Common myeloid progenitor, CD34-positive (primary cell): ENCODE measurements at regions of chr4 and their contacts with region 1.

Region 1: GRCh38 chr4:42656944-42657792 is at the start of gene ATP8A1:
- DNase-seq: peak; percentile 92 to 96 (median 94)
- H3K4me3 ChIP-seq: peak within 1 kb of the TSS; percentile 90 to 98 (median 93)
- H3K27ac ChIP-seq: peak within 1 kb of the TSS; percentile 96 to 98
- H3K4me1 ChIP-seq: peaks cover 26 to 42% (median 34%) of the 10 kb centered on the region in 4 experiments
- H3K27me3 ChIP-seq: no peaks in the 10 kb centered on the region

Region 2: DNA sequence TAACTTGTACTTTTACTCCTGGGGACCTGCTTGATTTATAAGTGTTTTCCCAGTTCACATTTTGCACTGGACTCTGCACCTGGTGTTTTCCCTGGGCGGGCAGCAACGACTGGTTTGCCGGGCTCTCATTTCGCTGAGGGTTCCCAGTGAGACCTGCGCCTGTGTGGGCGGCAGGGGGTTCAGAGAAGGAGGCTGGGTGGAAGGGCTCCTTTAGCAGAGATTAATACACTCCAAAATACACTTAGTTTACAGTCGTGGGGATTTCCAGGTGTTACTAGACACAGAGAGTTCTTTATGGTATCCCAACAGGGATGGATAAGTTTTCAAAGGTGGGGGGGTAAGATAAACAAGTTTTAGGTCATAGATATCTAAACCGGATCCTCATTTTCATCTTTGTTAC is 312.9 kb before region 1 on chr4:
- CTCF ChIA-PET with region 1: no interaction called
- POLR2A ChIA-PET with region 1: no interaction called
- DNase-seq: no peak
- H3K4me3 ChIP-seq: no peak overlapping the region
- H3K27ac ChIP-seq: no peak overlapping the region
- H3K4me1 ChIP-seq: no peaks in the 10 kb centered on the region
- H3K27me3 ChIP-seq: peaks cover 0 to 7% (median 0%) of the 10 kb centered on the region in 5 experiments

Region 3: DNA sequence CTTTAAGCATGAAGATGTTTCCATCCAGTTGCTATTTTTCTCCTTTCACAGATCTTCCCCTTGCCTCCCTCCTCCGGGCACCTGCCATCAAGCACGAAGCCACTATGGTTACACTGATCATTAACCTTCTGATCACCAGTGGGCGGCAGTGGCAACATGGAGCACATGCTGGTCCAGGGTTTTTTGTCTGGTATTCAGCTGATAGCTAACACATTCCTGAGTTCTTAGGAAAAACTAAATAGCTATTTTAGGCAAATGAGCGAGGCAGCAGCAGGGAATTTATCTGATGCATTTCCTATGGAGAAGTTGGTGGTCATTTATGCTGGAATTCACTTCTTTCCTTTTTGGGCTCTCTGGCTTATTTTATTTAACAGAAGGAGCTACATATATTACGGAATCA is 237.0 kb before region 1 on chr4:
- CTCF ChIA-PET with region 1: no interaction called
- POLR2A ChIA-PET with region 1: no interaction called
- DNase-seq: no peak
- H3K4me3 ChIP-seq: no peak overlapping the region
- H3K27ac ChIP-seq: no peak overlapping the region
- H3K4me1 ChIP-seq: peaks cover 0 to 3% (median 0%) of the 10 kb centered on the region in 4 experiments
- H3K27me3 ChIP-seq: no peaks in the 10 kb centered on the region

Region 4: DNA sequence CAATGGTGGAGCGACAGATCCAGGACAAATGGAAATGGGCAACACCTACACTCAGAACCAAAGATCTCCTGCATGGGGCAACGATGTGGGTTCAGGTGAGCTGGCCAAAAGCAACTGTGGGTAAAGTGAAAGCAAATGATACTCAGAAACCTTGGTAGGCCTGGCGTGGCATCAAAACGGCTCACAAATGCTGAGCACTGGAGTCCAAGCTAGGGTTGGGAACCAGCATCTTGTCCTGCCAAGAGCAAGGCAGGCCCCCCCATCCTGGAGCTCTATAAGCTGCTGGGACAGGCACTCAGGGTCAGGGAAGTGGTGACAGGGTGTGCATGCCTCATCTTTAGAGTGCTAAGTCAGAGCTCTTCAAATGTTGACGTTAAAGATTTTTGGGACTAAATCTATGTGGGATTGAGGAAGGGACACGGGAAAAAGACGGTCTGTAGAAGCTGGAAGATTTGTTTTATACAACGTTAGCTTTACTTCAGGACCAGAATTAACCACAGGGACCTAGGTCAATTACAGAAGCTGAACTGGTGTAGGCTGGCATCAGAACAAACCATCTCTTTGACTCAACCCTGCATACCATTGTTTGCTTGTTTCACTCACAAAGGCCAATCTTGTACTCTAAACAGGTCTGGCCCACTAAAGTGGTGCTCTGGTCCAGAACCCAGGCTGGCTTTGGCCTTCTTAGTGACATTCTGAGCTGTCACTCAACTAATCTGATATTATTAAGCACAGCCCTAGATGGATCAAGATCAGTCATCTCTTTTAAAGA is 11.0 kb before region 1 on chr4:
- CTCF ChIA-PET with region 1: interaction called, 16 read pairs
- POLR2A ChIA-PET with region 1: no interaction called
- DNase-seq: no peak
- H3K4me3 ChIP-seq: no peak overlapping the region
- H3K27ac ChIP-seq: no peak overlapping the region
- H3K4me1 ChIP-seq: peaks cover 0 to under 1% (median 0%) of the 10 kb centered on the region in 4 experiments
- H3K27me3 ChIP-seq: no peaks in the 10 kb centered on the region

Region 5: DNA sequence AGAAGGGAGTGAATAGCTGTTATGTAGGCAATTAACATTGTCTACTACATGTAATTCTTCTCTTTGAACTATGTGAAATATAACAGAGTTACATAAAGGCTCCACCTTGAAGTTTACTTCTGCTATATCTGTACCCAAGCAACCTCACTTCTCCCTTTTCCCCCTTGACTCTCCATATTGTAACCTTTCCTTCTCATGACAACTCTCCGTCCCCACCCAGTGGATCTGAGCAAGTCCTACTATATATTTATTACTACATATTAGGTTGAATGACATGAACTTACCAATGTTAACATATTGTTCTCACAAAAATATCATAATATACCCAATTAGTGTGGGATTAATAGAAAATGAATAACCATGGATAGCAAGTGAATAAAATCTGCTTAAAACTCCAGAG is 92.9 kb after region 1 on chr4:
- CTCF ChIA-PET with region 1: interaction called, 17 read pairs
- POLR2A ChIA-PET with region 1: no interaction called
- DNase-seq: peak; percentile 86 to 96 (median 95)
- H3K4me3 ChIP-seq: no peak overlapping the region
- H3K27ac ChIP-seq: no peak overlapping the region
- H3K4me1 ChIP-seq: peaks cover 0 to 3% (median 1%) of the 10 kb centered on the region in 4 experiments
- H3K27me3 ChIP-seq: no peaks in the 10 kb centered on the region